Panc1 (cell line): ENCODE measurements at regions of chr6 and their contacts with region 1.

Region 1: DNA sequence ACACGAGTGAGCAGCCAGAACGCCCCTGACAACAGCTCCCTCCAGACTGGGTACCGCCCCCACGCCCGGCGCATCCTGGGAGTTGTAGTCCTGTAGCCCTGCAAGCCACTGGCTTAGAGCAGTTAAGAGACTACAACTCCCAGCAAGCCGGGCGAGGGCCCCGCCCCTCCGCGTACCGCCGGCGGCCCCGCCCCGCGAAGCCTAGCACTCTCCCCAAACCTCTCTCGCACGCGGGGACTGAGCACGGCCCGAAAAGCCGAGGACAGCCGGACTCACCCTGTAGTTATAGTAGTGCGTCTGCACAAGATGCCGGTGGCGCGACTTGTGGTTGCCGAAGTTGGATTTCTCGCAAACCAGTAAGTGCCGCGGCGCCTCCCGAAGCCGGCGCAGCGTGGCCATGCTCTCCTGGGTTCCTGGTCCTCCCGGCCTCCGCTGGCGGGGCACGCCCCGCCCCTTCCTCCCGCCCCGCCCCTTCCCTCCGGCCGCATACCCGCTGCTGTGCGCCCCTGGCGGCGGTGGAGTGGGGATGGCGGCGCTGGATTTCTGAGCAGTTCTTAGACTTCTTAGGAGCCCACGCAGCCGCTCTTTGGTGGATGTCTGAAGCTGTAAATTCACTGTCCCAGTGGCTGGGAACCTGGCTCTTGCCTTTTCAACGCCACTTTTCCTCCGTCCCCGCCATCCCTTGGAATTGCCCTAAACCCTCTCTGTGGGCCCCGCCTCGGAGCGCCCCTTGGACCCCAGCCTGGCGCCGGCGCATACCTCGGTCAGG is at the start of gene RPP40:
- DNase-seq: peak; percentile 73
- ATAC-seq: peak; percentile 99
- H3K4me3 ChIP-seq: peak within 1 kb of the TSS; percentile 58 to 93
- H3K27ac ChIP-seq: peak within 1 kb of the TSS; percentile 86
- H3K4me1 ChIP-seq: no peaks in the 10 kb centered on the region
- H3K27me3 ChIP-seq: no peaks in the 10 kb centered on the region
- CTCF ChIP-seq: peak; percentile 96
- total RNA-seq, gene RPP40: 25.9 TPM

Region 2: DNA sequence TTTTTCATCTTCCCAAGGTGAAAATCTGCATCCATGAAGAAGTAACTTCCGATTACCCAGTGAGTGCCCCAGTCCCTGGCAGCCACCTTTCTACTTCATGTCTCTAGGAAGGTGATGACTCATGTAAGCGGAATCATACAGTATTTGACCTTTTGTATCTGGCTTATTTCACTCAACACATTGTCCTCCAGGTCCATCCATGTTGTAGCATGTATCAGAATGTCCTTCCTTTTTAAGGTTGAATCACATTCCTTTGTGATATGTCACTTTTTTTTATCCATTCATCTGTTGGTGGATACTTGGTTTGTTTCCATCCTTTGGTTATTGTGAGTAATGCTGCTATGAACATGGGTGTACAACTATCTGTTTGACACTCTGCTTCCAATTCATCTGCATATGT is 403.9 kb before region 1 on chr6:
- CTCF ChIA-PET with region 1: no interaction called
- POLR2A ChIA-PET with region 1: interaction called, 15 read pairs
- in situ Hi-C with region 1: no loop called
- intact Hi-C with region 1: no loop called
- DNase-seq: no peak
- ATAC-seq: no peak
- H3K4me3 ChIP-seq: no peak overlapping the region
- H3K27ac ChIP-seq: no peak overlapping the region
- H3K4me1 ChIP-seq: no peaks in the 10 kb centered on the region
- H3K27me3 ChIP-seq: no peaks in the 10 kb centered on the region
- CTCF ChIP-seq: no peak

Region 3: GRCh38 chr6:4870821-4871494 is 132.8 kb before region 1 on chr6:
- CTCF ChIA-PET with region 1: interaction called, 16 read pairs
- POLR2A ChIA-PET with region 1: no interaction called
- in situ Hi-C with region 1: no loop called
- intact Hi-C with region 1: no loop called
- DNase-seq: no peak
- ATAC-seq: no peak
- H3K4me3 ChIP-seq: no peak overlapping the region
- H3K27ac ChIP-seq: no peak overlapping the region
- H3K4me1 ChIP-seq: peaks cover 12% of the 10 kb centered on the region; the same call in 1 of the 2 replicates
- H3K27me3 ChIP-seq: no peaks in the 10 kb centered on the region
- CTCF ChIP-seq: no peak